Activated T-helper 1 cell treated with anti-CD3 and anti-CD28 coated beads, Interleukin-12 subunit alpha, Interleukin-12 subunit beta, Interleukin-2, Interleukin-4 antibody, amounts not matched to agents 30 ng/mL and 10 ng/mL and 1 ng/mL, durations not matched to agents 14 hours and 24 hours and 36 hours (primary cell): ENCODE measurements at regions of chrX and their contacts with region 1.

Region 1: DNA sequence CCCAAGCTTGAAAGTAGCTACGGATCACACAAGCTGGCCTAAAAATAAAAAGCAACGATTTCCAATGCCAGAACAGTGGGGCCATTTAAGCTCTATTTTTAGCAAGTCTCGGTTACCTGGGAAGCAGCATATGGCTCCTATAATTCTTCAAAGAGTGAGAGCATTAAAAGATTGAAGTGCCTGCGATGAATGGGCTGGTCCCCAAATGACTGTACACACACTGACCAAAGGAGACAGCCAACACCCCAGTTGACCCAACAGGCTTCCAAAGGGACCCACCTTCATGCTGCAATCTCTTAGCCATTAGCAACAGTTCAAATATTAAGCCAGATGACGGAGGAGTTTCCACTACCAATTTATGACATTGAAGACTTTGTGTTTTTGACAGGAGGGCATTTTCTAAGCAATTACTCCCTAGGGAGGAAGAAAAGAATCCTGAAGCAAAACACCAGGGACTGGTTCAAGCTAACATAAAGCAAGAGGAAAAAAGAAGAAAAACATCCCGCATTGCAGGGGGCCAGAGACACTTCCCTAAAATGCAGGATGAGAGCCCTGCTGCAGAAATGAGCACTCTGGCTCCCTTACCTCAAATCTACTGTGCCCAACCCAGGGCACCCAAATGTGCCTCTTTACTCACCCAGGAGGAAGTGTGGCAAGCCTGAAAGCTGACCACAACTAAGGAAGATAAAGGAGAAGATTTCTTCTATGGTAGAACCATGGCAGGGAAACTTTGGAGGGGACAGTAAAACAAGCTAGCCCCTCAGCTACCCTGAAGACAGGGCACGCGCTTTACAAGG is 21.6 kb downstream of the SH3KBP1 start:
- DNase-seq: no peak
- H3K4me3 Mint-ChIP-seq: peak overlapping the region; percentile 39
- H3K27ac Mint-ChIP-seq: no peak overlapping the region
- H3K4me1 Mint-ChIP-seq: peaks cover 60% of the 10 kb centered on the region
- H3K27me3 Mint-ChIP-seq: no peaks in the 10 kb centered on the region

Region 2: GRCh38 chrX:19824603-19825002 is 41.2 kb before region 1 on chrX:
- intact Hi-C with region 1: loop called (anchors 5 kb)
- DNase-seq: no peak
- H3K4me3 Mint-ChIP-seq: no peak overlapping the region
- H3K27ac Mint-ChIP-seq: no peak overlapping the region
- H3K4me1 Mint-ChIP-seq: peaks cover 20% of the 10 kb centered on the region
- H3K27me3 Mint-ChIP-seq: no peaks in the 10 kb centered on the region

Region 3: GRCh38 chrX:19852014-19853005 is 13.5 kb before region 1 on chrX:
- intact Hi-C with region 1: no loop called
- DNase-seq: no peak
- H3K4me3 Mint-ChIP-seq: no peak overlapping the region
- H3K27ac Mint-ChIP-seq: no peak overlapping the region
- H3K4me1 Mint-ChIP-seq: peaks cover 33% of the 10 kb centered on the region
- H3K27me3 Mint-ChIP-seq: no peaks in the 10 kb centered on the region